B cell (primary cell): ENCODE measurements at regions of chr20 and their contacts with region 1.

Region 1: GRCh38 chr20:44582311-44583025 is at the start of gene PKIG:
- DNase-seq: peak; percentile 57
- ATAC-seq: no peak
- H3K4me3 ChIP-seq: peak within 1 kb of the TSS; percentile 57 to 94 (median 76)
- H3K4me3 Mint-ChIP-seq: peak within 1 kb of the TSS; percentile 92
- H3K27ac ChIP-seq: peak within 1 kb of the TSS; percentile 85 to 89
- H3K27ac Mint-ChIP-seq: peak within 1 kb of the TSS; percentile 91
- H3K4me1 ChIP-seq: peaks cover 68 to 79% of the 10 kb centered on the region in 2 donors
- H3K4me1 Mint-ChIP-seq: peaks cover 86% of the 10 kb centered on the region
- H3K27me3 ChIP-seq: no peaks in the 10 kb centered on the region
- H3K27me3 Mint-ChIP-seq: no peaks in the 10 kb centered on the region
- CTCF ChIP-seq: no peak
- total RNA-seq, gene PKIG: 117 and 128 TPM in 2 replicates

Region 2: DNA sequence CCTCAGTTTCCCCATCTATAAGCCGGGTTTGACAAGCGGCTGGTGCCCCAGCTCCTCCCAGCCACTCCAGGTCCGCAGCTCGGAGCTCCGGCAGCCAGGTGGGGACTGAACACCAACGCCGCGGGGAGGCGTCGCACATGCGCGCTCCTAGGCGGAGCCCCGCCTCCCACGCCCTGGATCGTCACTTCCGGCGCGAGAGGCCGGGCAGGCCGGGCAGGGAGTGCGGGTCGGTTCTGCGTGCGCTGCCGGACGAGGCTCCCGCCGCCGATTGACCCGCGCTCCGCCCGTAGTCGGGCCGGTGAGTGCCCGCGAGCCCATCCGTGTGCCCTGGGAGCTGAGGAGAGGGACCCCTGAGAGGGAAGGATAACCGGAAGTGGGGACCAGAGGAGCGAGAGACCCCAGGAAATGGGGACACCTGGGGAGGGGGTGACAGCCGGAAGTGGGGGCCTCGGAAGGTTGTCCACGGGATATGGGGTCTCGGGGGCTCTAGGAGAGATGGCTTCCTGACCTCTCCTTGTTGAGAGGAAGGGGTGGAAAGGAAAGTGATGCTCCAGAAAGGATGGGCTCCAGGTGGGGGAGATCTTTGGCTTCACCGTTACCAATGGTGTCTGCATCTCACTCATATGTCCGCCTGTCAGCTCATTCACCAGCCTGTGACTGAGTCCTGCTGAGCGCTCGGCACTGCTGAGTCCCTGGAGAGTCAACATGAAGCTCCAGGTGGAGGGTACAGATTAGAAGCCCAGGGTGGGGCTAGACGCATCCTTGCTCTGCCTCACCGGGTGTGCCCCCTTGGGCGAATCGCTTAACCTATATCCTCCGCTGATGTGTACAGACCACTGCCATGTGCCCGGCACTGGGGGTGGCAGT is 106.5 kb before region 1 on chr20 and contains the start of gene TTPAL:
- CTCF ChIA-PET with region 1: no interaction called
- POLR2A ChIA-PET with region 1: no interaction called
- intact Hi-C with region 1: loop called (anchors 2 kb)
- DNase-seq: peak; percentile 93
- ATAC-seq: peak; percentile 94
- H3K4me3 ChIP-seq: peak within 1 kb of the TSS; percentile 70 to 99 (median 78)
- H3K4me3 Mint-ChIP-seq: peak within 1 kb of the TSS; percentile 97
- H3K27ac ChIP-seq: peak within 1 kb of the TSS; percentile 90 to 93
- H3K27ac Mint-ChIP-seq: peak within 1 kb of the TSS; percentile 95
- H3K4me1 ChIP-seq: peaks cover 23 to 34% of the 10 kb centered on the region in 2 donors
- H3K4me1 Mint-ChIP-seq: peaks cover 43% of the 10 kb centered on the region
- H3K27me3 ChIP-seq: no peaks in the 10 kb centered on the region
- H3K27me3 Mint-ChIP-seq: peaks cover 2% of the 10 kb centered on the region
- CTCF ChIP-seq: no peak
- total RNA-seq, gene TTPAL: 26.8 and 27.8 TPM in 2 replicates

Region 3: DNA sequence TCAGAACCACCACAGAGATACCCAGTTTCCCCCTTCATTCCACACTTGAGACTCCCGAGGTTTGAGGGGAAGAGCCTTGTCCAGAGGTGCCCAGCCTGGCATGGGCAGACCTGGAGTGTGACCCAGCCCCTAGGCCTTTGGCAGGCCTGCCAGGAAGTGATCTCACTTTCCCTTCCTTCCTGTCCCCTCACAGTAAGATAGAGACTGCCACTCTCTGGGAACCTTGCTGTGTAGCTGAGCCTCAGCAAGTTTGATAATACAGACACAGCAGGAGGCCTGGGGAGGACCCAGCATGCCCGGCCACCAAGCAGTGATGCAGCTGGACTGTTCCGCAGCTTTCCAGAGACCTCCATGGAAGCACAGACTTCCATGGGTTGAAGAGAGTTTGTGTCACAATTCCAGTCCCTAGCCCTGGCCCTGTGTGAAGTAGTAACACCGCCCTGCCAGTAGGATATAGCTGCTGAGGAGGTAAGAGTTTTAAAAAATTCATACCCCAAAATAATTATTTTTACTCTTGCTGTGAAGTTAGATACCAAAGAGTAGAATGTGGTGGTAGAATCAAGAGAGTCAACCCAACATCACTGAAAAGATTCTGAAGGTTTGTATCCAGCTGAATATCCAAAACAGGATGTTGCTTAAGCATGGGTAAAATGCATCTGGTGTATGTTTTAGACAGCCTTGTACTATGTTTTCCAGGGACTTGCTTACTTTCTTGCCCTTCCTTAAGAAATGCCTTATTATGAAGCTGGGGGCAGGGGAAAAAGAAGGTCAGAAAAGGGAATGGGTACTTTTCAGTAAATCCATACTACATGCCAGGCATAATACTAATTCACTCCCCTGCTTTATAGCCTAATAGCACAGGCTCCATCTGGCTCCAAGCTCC is 16.2 kb after region 1 on chr20:
- CTCF ChIA-PET with region 1: interaction called, 772 read pairs
- POLR2A ChIA-PET with region 1: interaction called, 21 read pairs
- intact Hi-C with region 1: loop called (anchors 1 kb)
- DNase-seq: peak; percentile 42
- ATAC-seq: peak; percentile 32
- H3K4me3 ChIP-seq: peak overlapping the region; percentile 14 to 45 (median 27)
- H3K4me3 Mint-ChIP-seq: peak overlapping the region; percentile 75
- H3K27ac ChIP-seq: peak overlapping the region; percentile 60 to 88
- H3K27ac Mint-ChIP-seq: peak overlapping the region; percentile 97
- H3K4me1 ChIP-seq: peaks cover 94 to 100% of the 10 kb centered on the region in 2 donors
- H3K4me1 Mint-ChIP-seq: peaks cover 82% of the 10 kb centered on the region
- H3K27me3 ChIP-seq: no peaks in the 10 kb centered on the region
- H3K27me3 Mint-ChIP-seq: no peaks in the 10 kb centered on the region
- CTCF ChIP-seq: peak; percentile 27

Region 4: GRCh38 chr20:44642203-44643153 is 60.0 kb after region 1 on chr20:
- CTCF ChIA-PET with region 1: interaction called, 17 read pairs
- POLR2A ChIA-PET with region 1: interaction called, 5 read pairs
- intact Hi-C with region 1: loop called (anchors 2 kb)
- DNase-seq: peak; percentile 59
- ATAC-seq: no peak
- H3K4me3 ChIP-seq: no peak overlapping the region
- H3K4me3 Mint-ChIP-seq: peak overlapping the region; percentile 71
- H3K27ac ChIP-seq: peak overlapping the region; percentile 50 to 74
- H3K27ac Mint-ChIP-seq: peak overlapping the region; percentile 84
- H3K4me1 ChIP-seq: peaks cover 47 to 61% of the 10 kb centered on the region in 2 donors
- H3K4me1 Mint-ChIP-seq: peaks cover 62% of the 10 kb centered on the region
- H3K27me3 ChIP-seq: no peaks in the 10 kb centered on the region
- H3K27me3 Mint-ChIP-seq: no peaks in the 10 kb centered on the region
- CTCF ChIP-seq: no peak